ENCODE measurements at regions of chr2 and their contacts with region 1.

Region 1: GRCh38 chr2:173978447-173978846 is 13.3 kb upstream of the SP3 start:
- DNase-seq: peak; percentile 80
- H3K4me3 ChIP-seq: no peak overlapping the region
- H3K27ac ChIP-seq: no peak overlapping the region
- H3K4me1 ChIP-seq: peaks cover 21% of the 10 kb centered on the region
- H3K27me3 ChIP-seq: no peaks in the 10 kb centered on the region
- CTCF ChIP-seq: no peak

Region 2: DNA sequence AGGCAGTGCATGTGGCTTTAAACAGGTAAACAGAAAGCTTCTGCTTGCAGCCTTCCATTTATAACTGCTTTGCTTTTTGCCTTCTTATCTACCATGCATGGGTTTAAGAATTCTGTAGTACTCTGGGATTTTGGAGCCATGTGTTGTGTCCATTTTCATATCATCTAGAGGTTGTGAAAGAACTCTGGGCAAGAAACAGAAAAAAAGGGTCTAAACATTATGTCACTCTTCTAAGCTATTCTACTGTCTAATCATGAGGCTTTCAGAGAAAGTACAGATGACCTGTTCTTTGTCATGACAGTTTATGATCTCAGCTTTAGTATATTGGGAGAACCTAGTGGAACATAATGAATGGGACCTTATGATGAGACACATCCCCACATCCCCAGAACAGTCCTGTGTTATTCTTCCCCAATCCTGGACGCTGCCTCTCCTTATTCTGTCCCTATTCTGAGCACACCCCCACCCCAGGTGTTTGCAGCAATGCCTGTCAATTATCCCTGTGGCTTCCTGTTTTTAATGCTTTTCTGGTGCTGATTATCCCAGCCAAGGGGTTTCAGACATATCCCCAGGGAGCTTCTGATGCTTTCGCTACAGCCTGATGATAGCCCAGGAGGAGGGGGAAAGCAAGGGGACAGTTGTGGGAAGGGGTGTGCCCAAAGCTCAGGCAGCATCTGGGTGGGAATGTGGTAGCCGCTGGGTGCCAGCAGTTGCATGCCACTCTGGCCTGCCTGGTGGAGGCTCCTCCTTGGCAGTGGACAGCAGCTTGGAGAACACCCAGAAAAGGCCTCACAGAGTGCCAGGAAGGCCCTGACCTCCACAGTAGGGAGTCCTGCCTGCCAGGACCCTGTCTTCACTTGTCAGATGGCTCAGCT is 1072.3 kb before region 1 on chr2:
- CTCF ChIA-PET with region 1: no interaction called
- dilution Hi-C with region 1: no loop called
- in situ Hi-C with region 1: no loop called
- intact Hi-C with region 1: no loop called
- DNase-seq: no peak
- H3K4me3 ChIP-seq: no peak overlapping the region
- H3K27ac ChIP-seq: no peak overlapping the region
- H3K4me1 ChIP-seq: no peaks in the 10 kb centered on the region
- H3K27me3 ChIP-seq: peaks cover 6% of the 10 kb centered on the region
- CTCF ChIP-seq: no peak

Region 3: GRCh38 chr2:173667417-173667816 is 311.0 kb before region 1 on chr2:
- CTCF ChIA-PET with region 1: no interaction called
- dilution Hi-C with region 1: no loop called
- in situ Hi-C with region 1: no loop called
- intact Hi-C with region 1: no loop called
- DNase-seq: peak; percentile 60
- H3K4me3 ChIP-seq: no peak overlapping the region
- H3K27ac ChIP-seq: peak overlapping the region; percentile 58
- H3K4me1 ChIP-seq: peaks cover 20% of the 10 kb centered on the region
- H3K27me3 ChIP-seq: no peaks in the 10 kb centered on the region
- CTCF ChIP-seq: peak; percentile 55 to 70

Region 4: GRCh38 chr2:174023591-174024523 is 45.4 kb after region 1 on chr2:
- CTCF ChIA-PET with region 1: no interaction called
- dilution Hi-C with region 1: no loop called
- in situ Hi-C with region 1: loop called in 1 of 2 experiments (anchors 10 kb)
- intact Hi-C with region 1: no loop called
- DNase-seq: peak; percentile 100
- H3K4me3 ChIP-seq: no peak overlapping the region
- H3K27ac ChIP-seq: peak overlapping the region; percentile 77
- H3K4me1 ChIP-seq: peaks cover 7% of the 10 kb centered on the region
- H3K27me3 ChIP-seq: no peaks in the 10 kb centered on the region
- CTCF ChIP-seq: no peak

Measured in mammary epithelial cell (primary cell).